ENCODE measurements at regions of chr11 and their contacts with region 1.

Region 1: DNA sequence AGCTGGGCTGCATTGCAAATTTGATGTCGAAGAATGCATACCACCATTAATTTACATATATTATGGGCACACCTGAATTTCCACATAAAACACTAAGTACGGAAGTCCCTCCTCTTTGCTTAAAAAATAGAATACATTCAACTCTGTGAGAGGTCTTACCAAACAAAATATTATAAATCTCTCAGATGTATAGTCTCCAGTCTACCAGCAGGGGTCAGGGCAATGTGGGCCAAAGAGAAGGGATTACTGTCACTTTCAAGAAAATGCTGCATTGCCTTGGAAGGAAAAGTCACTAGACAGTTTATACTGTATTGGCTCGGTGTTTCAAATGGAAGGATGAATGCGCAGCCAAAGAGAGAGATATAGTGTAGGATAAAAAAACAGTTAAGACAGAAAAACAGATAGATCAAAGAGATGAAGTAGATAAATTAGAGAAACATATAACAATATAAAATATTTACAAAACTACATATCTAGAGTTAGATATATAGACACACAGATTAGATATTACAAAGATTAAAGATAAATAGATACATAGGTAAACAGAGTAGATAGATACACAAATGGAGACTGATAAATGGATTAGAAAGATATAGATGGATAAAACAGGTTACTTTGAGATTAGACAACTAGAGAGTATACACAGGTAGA is 20.9 kb downstream of the SERGEF start:
- DNase-seq: peak; percentile 62
- CTCF ChIP-seq: peak; percentile 77

Region 2: GRCh38 chr11:17598700-17599459 is 393.0 kb before region 1 on chr11:
- in situ Hi-C with region 1: loop called (anchors 25 kb)
- DNase-seq: peak; percentile 79
- CTCF ChIP-seq: peak; percentile 99

Region 3: GRCh38 chr11:18844753-18845367 is 853.0 kb after region 1 on chr11:
- in situ Hi-C with region 1: no loop called
- DNase-seq: peak; percentile 24
- CTCF ChIP-seq: peak; percentile 82

Measured in GM13977 (cell line).